AG04450 (cell line): ENCODE measurements at regions of chr4 and their contacts with region 1.

Region 1: DNA sequence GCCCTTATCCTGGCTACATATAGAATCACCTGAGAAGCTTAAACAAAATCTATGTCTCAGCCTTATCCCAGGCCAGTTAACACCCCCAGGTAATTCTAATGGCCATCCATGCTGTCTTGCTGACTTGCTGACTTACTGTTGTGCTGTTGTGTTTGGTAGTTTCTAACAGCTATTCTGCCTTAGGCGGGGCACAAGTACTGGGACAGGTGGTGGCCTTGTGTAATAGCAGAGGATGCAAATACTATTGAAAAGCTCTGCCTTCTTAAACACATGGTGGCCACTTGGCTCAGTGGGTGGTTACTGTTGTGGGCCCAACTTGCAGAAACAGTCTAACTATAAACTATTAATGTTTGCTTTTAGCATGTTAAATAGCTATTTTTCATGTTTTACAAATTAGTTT is 56.2 kb downstream of the CDS1 start:
- DNase-seq: no peak
- H3K4me3 ChIP-seq: no peak overlapping the region
- H3K27ac ChIP-seq: no peak overlapping the region
- H3K27me3 ChIP-seq: no peaks in the 10 kb centered on the region
- CTCF ChIP-seq: no peak

Region 2: GRCh38 chr4:82811838-82812341 is 1827.3 kb before region 1 on chr4:
- CTCF ChIA-PET with region 1: interaction called, 10 read pairs
- POLR2A ChIA-PET with region 1: no interaction called
- DNase-seq: no peak
- H3K4me3 ChIP-seq: no peak overlapping the region
- H3K27ac ChIP-seq: peak overlapping the region; percentile 11
- H3K27me3 ChIP-seq: no peaks in the 10 kb centered on the region
- CTCF ChIP-seq: no peak